ENCODE measurements at regions of chr2 and their contacts with region 1.

Region 1: GRCh38 chr2:10911261-10912075 is at the start of gene KCNF1:
- DNase-seq: peak; percentile 32
- H3K4me3 ChIP-seq: peak within 1 kb of the TSS; percentile 25
- H3K27ac ChIP-seq: no peak within 1 kb of the TSS
- H3K4me1 ChIP-seq: no peaks in the 10 kb centered on the region
- H3K27me3 ChIP-seq: peaks cover 28% of the 10 kb centered on the region
- CTCF ChIP-seq: no peak
- total RNA-seq, gene KCNF1: 0.22 to 0.90 TPM

Region 2: GRCh38 chr2:10832203-10832936 is 79.1 kb before region 1 on chr2:
- intact Hi-C with region 1: loop called (anchors 5 kb)
- DNase-seq: peak; percentile 84
- H3K4me3 ChIP-seq: no peak overlapping the region
- H3K27ac ChIP-seq: no peak overlapping the region
- H3K4me1 ChIP-seq: peaks cover 4% of the 10 kb centered on the region
- H3K27me3 ChIP-seq: no peaks in the 10 kb centered on the region
- CTCF ChIP-seq: peak; percentile 97

Region 3: GRCh38 chr2:11764359-11764758 is 852.9 kb after region 1 on chr2:
- intact Hi-C with region 1: no loop called
- DNase-seq: peak; percentile 73
- H3K4me3 ChIP-seq: no peak overlapping the region
- H3K27ac ChIP-seq: no peak overlapping the region
- H3K4me1 ChIP-seq: peaks cover 4% of the 10 kb centered on the region
- H3K27me3 ChIP-seq: no peaks in the 10 kb centered on the region
- CTCF ChIP-seq: no peak

Measured in colonic mucosa (tissue), 4 donors.